Head of caudate nucleus (tissue), 42 donors: ENCODE measurements at regions of chr16 and their contacts with region 1.

Region 1: DNA sequence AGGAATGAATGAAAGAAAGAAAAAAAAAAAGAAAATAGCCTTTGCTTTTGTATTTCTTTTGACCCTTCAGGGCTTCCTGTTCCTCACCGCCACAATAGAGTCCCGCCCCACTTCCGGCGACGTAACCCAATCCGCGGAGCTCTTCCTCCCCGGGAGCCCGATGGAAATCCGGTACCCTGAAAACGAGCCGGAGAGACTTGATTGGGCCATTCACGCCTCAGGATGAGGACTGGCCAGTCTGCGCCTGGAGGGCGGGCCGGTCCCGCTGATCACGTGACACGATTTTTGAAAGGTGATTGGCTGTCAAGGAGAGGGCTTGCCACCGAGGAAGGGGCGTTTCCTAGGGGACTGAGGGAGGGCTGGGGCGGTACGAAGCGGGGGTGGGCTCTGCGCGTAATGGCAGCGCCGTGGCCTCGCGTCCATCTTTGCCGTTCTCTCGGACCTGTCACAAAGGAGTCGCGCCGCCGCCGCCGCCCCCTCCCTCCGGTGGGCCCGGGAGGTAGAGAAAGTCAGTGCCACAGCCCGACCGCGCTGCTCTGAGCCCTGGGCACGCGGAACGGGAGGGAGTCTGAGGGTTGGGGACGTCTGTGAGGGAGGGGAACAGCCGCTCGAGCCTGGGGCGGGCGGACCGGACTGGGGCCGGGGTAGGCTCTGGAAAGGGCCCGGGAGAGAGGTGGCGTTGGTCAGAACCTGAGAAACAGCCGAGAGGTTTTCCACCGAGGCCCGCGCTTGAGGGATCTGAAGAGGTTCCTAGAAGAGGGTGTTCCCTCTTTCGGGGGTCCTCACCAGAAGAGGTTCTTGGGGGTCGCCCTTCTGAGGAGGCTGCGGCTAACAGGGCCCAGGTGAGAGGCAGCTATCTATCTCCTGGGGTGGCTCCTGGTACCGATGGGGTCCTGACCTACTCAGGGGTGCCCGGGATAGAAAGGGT is at the starts of genes PSME3IP1 and RSPRY1:
- DNase-seq: peak; percentile 94 to 100 (median 99)

Region 2: DNA sequence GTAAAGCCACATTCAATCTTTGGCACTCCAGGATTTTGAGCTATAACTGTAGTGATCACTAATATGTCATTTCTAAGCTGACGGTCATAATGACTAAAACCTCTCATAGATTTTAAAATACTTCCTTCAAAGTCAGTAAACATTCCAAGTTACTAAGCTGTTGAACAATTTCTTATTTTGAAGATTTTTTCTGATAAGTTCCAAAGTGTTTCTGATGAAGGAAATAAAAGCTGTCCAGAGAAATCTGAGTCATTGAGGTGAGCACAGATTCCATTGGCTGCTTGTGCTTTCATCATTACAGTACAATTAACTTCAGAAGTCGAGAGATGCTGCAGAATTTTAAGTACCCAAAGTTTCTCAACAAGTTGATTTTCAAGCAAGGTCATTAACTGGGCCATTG is 173.0 kb before region 1 on chr16:
- intact Hi-C with region 1: no loop called
- DNase-seq: no peak

Region 3: DNA sequence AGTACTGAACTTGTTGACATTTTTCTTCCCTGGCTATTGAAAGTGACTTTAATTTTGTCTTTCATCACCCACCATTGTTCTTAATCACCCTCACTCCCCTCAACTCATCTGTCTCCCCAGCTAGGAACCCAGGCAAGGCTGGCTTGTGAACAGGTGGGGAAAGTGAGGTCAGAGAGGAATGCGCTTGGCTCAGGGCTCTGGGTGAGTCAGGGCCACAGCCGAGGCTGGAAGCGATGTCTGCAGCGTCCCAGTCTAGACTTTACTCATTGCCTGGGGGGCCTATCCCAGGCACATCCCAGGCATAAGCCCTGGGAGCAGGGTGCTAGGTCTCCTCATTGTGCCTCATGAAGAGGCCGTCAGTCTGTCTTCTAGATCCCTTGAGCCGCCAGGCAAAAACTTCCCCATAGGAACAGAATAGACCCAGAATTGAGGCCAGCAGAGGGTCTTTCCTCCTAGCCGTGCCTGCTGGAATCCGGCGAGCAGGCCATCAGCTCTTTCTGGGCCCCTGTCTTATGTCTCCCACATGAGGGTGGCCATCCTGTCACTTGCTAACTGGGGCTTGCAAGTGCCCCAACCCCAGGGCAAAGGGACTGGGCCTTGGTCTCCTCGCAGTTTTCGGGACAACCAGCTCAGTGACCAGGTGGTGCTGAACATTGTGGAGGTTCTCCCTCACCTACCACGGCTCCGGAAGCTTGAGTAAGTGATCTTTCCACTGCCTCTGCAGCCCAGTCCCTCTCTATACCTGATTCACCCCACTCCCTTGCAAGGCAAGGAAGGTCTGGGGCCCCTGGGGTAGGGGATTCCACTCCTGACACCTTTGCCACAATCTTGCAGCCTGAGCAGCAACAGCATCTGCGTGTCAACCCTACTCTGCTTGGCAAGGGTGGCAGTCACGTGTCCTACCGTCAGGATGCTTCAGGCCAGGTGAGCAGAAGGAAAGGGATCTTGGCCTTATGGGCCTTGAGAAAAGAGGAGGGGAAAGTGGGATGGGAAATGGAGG is 156.7 kb before region 1 on chr16:
- intact Hi-C with region 1: no loop called
- DNase-seq: no peak

Region 4: DNA sequence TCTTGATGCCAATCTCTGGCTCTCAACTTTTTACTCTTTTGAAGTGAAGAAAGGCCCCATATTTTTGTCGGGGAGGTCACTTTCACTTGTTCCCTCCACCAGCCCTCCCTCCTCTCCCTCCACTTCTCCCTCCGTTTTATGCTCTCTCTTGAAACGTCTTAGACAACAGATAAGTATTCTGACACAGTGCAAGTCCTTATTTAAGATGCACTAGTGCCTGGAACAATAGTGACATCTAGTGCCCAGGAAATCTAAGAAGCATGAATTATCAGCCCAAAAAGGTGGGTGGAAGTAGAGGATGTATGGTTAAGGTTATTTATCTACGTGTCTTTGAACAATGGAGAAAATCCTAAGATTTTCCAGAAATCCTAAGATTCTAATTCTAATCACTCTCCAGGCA is 18.3 kb before region 1 on chr16:
- intact Hi-C with region 1: no loop called
- DNase-seq: peak in 8 of 42 donors; percentile 40 to 76 (median 48)

Region 5: GRCh38 chr16:57244767-57245471 is 58.7 kb after region 1 on chr16 and contains the start of gene ARL2BP:
- intact Hi-C with region 1: loop called (anchors 5 kb)
- DNase-seq: peak; percentile 97 to 100 (median 99)

Region 6: DNA sequence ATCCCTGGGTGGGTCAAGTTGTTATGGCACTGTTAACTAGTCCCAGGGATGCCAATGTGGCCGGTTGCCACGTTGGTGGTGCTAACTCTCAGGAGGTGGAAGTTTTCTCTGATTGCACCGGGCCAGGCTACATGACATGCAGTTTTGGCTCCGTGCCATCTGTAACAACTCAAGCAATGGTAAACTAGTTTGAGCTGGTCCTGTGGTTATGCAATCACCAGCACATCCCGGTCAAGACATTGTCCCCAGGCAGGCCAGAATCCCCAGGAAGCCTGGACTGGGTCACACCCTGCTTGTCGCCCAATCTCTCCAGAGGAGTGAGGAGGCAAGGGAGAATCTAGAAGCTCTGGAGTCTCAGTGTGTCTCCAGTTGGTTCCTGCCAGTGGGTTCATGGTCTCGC is 208.2 kb after region 1 on chr16:
- intact Hi-C with region 1: no loop called
- DNase-seq: peak in 1 of 42 donors; percentile 2